B cell (primary cell): ENCODE measurements at regions of chr14 and their contacts with region 1.

Region 1: GRCh38 chr14:55671641-55672040 is 91.6 kb downstream of the KTN1 start:
- DNase-seq: no peak
- ATAC-seq: no peak
- H3K4me3 ChIP-seq: no peak overlapping the region
- H3K4me3 Mint-ChIP-seq: no peak overlapping the region
- H3K27ac ChIP-seq: no peak overlapping the region
- H3K27ac Mint-ChIP-seq: no peak overlapping the region
- H3K4me1 ChIP-seq: no peaks in the 10 kb centered on the region
- H3K4me1 Mint-ChIP-seq: peaks cover 1% of the 10 kb centered on the region
- H3K27me3 ChIP-seq: no peaks in the 10 kb centered on the region
- H3K27me3 Mint-ChIP-seq: no peaks in the 10 kb centered on the region
- CTCF ChIP-seq: no peak

Region 2: GRCh38 chr14:55638665-55639064 is 33.0 kb before region 1 on chr14:
- CTCF ChIA-PET with region 1: no interaction called
- POLR2A ChIA-PET with region 1: no interaction called
- intact Hi-C with region 1: loop called (anchors 5 kb)
- DNase-seq: no peak
- ATAC-seq: no peak
- H3K4me3 ChIP-seq: no peak overlapping the region
- H3K4me3 Mint-ChIP-seq: no peak overlapping the region
- H3K27ac ChIP-seq: no peak overlapping the region
- H3K27ac Mint-ChIP-seq: no peak overlapping the region
- H3K4me1 ChIP-seq: no peaks in the 10 kb centered on the region
- H3K4me1 Mint-ChIP-seq: no peaks in the 10 kb centered on the region
- H3K27me3 ChIP-seq: no peaks in the 10 kb centered on the region
- H3K27me3 Mint-ChIP-seq: no peaks in the 10 kb centered on the region
- CTCF ChIP-seq: no peak